MCF 10A (cell line): ENCODE measurements at regions of chr15 and their contacts with region 1.

Region 1: DNA sequence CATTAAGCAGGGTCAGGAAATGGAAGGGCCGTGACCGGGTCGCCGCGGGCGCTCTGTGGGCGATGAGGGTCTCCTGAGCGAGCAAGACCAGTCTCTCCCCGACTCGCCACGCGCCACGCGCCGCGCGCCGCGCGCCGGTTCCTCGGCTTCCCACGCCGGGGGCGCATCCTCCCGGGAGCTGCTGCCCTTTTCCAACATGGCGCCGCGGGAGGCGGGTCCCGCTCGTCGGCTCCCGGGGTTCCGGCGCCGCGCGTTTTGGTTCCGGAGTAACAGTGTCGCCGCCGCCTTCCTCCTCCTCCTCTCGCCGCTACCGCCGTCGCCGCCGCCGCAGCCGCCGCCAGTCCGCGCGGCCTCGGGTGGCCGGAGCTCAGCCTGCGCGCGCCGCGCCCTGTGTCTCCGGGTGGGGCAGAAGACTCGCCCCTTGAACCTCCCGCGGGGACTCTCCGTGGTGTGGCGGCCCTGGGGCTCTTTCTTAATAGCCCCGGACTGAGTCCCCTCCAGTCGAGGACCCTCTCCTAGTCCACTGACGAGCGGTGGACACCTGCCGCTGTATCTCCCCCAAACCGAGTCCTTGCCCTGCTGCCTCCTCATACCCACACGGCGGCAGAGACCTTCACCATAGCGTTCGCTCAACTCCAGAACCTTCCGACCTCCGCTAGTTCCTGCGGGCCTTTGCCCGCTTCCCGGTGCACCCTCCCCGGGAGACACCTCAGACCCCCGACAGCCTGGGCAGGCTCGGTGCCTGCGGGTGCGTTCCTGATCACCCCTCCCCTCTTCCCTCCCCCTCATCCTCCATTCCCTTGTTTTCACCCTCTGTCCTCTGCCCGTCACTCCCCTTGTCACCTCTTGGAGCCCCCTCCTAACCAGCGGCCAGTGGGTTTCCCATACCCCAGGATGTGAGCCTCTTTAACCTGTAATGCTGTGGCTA is at the start of gene MAP2K5:
- DNase-seq: peak; percentile 77
- H3K4me3 Mint-ChIP-seq: peak within 1 kb of the TSS; percentile 96
- H3K27ac Mint-ChIP-seq: peak within 1 kb of the TSS; percentile 89
- H3K4me1 Mint-ChIP-seq: peaks cover 15% of the 10 kb centered on the region
- H3K27me3 Mint-ChIP-seq: no peaks in the 10 kb centered on the region
- CTCF ChIP-seq: no peak
- total RNA-seq, gene MAP2K5: 24.4 and 29.0 TPM in 2 replicates

Region 2: GRCh38 chr15:67510597-67511225 is 32.0 kb before region 1 on chr15:
- CTCF ChIA-PET with region 1: interaction called, 3 read pairs
- POLR2A ChIA-PET with region 1: interaction called, 10 read pairs
- intact Hi-C with region 1: no loop called
- DNase-seq: no peak
- H3K4me3 Mint-ChIP-seq: no peak overlapping the region
- H3K27ac Mint-ChIP-seq: no peak overlapping the region
- H3K4me1 Mint-ChIP-seq: peaks cover 16% of the 10 kb centered on the region
- H3K27me3 Mint-ChIP-seq: no peaks in the 10 kb centered on the region
- CTCF ChIP-seq: no peak

Region 3: DNA sequence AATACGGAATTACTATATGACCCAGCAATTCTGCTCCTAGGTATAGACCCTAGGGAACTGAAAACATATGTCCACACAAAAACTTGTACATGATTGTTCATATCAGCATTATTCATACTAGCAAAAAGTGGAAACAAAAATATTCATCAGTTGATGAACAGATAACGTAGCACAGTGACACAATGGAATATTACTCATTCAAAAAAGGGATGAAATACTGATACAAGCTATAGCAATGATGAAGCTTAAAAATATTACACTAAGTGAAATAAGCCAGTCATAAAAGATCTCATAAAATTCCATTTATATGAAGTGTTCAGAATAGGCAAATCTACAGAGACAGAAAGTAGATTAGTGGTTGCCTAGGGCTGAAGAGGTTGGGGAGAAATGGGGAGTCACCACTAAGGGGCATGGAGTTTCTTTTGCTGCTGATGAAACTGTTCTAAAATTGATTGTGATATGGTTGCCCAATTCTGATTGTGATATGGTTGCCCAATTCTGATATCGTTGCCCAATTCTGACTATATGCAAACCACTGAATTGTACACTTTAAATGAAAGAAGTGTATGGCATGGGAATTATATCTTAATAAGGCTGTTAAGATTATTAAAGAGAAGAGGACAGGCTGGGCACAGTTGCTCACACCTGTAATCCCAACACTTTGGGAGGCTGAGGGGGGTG is 11.2 kb before region 1 on chr15:
- CTCF ChIA-PET with region 1: interaction called, 3 read pairs
- POLR2A ChIA-PET with region 1: interaction called, 30 read pairs
- intact Hi-C with region 1: no loop called
- DNase-seq: peak; percentile 13
- H3K4me3 Mint-ChIP-seq: no peak overlapping the region
- H3K27ac Mint-ChIP-seq: peak overlapping the region; percentile 79
- H3K4me1 Mint-ChIP-seq: peaks cover 7% of the 10 kb centered on the region
- H3K27me3 Mint-ChIP-seq: no peaks in the 10 kb centered on the region
- CTCF ChIP-seq: no peak

Region 4: DNA sequence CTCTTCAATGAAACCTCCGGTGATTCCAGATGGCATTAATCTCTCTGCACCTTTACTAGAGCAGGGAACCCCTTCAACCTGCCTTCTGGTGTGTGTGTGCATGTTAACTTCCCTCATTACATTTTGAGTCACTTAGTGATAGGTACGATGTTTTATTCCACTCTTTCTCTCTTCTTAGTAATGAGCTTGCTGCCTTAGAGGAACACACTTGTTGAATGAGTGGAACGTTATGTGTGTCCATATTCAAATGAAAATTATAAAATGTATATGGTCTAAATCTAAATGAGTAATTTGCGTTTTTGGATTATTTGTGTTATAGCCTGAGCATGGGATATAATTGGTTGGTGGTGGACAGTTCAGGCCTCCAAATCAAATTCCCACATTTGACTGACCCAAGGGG is 11.9 kb after region 1 on chr15:
- CTCF ChIA-PET with region 1: no interaction called
- POLR2A ChIA-PET with region 1: interaction called, 12 read pairs
- intact Hi-C with region 1: no loop called
- DNase-seq: no peak
- H3K4me3 Mint-ChIP-seq: no peak overlapping the region
- H3K27ac Mint-ChIP-seq: no peak overlapping the region
- H3K4me1 Mint-ChIP-seq: no peaks in the 10 kb centered on the region
- H3K27me3 Mint-ChIP-seq: no peaks in the 10 kb centered on the region
- CTCF ChIP-seq: no peak

Region 5: GRCh38 chr15:67833710-67834511 is 291.2 kb after region 1 on chr15:
- CTCF ChIA-PET with region 1: no interaction called
- POLR2A ChIA-PET with region 1: no interaction called
- intact Hi-C with region 1: loop called (anchors 2 kb)
- DNase-seq: peak; percentile 41
- H3K4me3 Mint-ChIP-seq: peak overlapping the region; percentile 51
- H3K27ac Mint-ChIP-seq: no peak overlapping the region
- H3K4me1 Mint-ChIP-seq: peaks cover 9% of the 10 kb centered on the region
- H3K27me3 Mint-ChIP-seq: no peaks in the 10 kb centered on the region
- CTCF ChIP-seq: peak; percentile 57